ENCODE measurements at regions of chr19 and their contacts with region 1.

Region 1: DNA sequence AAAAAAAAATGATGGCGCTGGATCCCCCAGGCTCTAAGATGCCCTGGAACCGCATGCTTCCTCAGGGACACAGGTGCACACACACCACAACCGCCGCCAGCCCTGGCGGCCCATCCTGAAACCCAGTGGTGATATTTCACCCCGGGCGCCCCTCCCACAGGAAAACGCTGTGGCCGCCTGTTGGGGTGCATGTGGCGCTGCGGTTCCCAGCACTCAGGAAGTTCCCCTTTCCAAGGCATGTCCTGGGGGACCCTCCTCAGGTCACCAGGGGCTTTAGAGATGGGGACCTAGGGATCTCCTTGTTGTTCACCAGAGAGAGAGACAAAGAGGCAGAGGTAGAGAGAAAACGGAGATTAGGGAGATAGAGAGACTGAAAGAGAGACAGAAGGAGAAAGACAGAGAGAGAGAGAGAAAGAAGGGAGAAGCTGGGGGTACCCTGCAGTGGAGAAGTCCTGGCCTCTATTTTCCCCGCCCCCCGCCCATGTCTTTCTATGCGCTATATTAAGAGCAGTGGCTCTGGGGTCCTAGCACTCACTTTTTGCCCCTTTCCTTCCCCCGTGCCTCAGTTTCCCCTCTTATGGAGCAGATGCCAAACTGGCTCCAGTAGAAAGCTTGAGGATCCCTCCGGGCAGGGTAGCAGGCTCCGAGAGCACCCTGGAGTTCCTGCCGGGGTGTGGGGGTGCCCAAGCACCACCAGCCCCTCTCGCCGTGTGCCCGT is 2.3 kb downstream of the ADGRE2 start:
- DNase-seq: peak; percentile 3
- H3K4me3 Mint-ChIP-seq: peak overlapping the region; percentile 74
- H3K27ac Mint-ChIP-seq: peak overlapping the region; percentile 53
- H3K4me1 Mint-ChIP-seq: peaks cover 6% of the 10 kb centered on the region
- H3K27me3 Mint-ChIP-seq: no peaks in the 10 kb centered on the region
- CTCF ChIP-seq: no peak

Region 2: DNA sequence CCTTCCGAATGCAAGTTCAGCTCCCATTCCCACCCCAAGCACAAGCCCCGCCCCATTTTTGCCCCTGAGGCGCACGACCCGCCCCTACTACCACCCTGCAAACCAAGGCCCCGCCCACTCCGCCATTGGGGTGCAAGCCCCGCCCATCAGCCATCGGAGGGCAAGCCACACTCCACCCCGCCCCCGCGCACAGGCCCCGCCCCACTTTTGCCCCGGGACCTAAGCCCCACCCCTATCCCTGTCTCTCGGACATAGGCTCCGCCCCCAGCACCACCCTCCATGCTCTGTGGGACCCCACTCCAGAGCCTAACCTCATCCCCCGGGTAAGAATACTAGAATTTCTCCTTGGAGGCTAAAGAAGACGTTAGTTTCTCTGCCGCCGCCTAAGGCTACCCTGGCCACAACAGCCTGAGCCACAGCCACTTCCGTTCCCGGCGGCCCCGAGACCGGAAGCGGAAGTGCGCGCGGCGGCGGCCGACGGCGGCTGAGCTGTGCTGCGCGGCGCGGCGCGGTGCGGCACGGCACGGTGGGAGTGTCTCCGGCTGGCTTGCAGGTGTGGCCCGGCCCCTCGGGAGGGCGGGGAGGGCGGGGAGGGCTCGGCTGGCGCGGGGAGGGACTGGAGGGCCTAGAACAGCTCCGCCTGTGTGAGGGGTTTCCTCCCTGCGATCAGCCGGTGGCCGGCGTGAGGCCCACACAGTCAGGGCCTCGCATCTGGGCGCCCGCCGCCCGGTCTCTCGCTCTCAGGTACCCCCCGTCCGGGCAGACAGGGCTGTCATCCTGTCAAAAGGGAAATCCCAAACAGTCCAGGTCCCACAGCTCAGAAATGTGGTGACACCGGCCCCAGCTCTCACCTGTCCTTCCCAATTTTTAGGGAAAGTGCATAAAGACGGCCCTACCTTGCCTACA is 86.2 kb before region 1 on chr19 and contains the start of gene ZNF333:
- CTCF ChIA-PET with region 1: no interaction called
- POLR2A ChIA-PET with region 1: interaction called, 6 read pairs
- intact Hi-C with region 1: loop called (anchors 5 kb)
- DNase-seq: peak; percentile 89
- H3K4me3 Mint-ChIP-seq: peak within 1 kb of the TSS; percentile 94
- H3K27ac Mint-ChIP-seq: peak within 1 kb of the TSS; percentile 99
- H3K4me1 Mint-ChIP-seq: no peaks in the 10 kb centered on the region
- H3K27me3 Mint-ChIP-seq: no peaks in the 10 kb centered on the region
- CTCF ChIP-seq: no peak
- total RNA-seq, gene ZNF333: 15.4 and 17.5 TPM in 2 replicates

Region 3: GRCh38 chr19:14786421-14786851 is 10.4 kb after region 1 on chr19:
- CTCF ChIA-PET with region 1: interaction called, 36 read pairs
- POLR2A ChIA-PET with region 1: interaction called, 5 read pairs
- intact Hi-C with region 1: no loop called
- DNase-seq: peak; percentile 43
- H3K4me3 Mint-ChIP-seq: no peak overlapping the region
- H3K27ac Mint-ChIP-seq: no peak overlapping the region
- H3K4me1 Mint-ChIP-seq: peaks cover 12% of the 10 kb centered on the region
- H3K27me3 Mint-ChIP-seq: no peaks in the 10 kb centered on the region
- CTCF ChIP-seq: peak; percentile 92